Endothelial cell of umbilical vein (primary cell): ENCODE measurements at regions of chr2 and their contacts with region 1.

Region 1: GRCh38 chr2:198383392-198383791 is 579.0 kb downstream of the PLCL1 start:
- DNase-seq: no peak
- H3K4me3 ChIP-seq: no peak overlapping the region
- H3K27ac ChIP-seq: no peak overlapping the region
- H3K4me1 ChIP-seq: no peaks in the 10 kb centered on the region
- H3K27me3 ChIP-seq: no peaks in the 10 kb centered on the region
- CTCF ChIP-seq: no peak
- POLR2A ChIP-seq: no peak

Region 2: DNA sequence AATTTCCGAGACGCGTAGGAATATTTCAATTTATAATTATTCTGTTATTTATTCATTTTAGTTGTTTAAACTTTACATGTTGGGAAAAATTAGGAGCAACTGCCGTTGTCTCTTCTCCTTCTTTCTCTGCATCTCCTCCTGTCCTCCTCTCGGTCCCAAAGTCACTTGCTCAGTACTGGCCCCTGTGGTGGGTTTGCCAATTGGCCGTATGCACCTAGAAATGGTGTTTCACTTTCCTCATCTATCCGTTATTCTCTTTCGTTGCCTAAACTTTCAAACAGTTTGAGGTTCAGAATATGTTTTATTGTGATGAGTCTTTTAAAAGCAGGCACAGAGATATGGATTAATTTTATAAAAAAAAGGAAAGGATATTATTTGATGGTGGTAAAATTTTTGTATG is 61.1 kb before region 1 on chr2:
- CTCF ChIA-PET with region 1: no interaction called
- POLR2A ChIA-PET with region 1: no interaction called
- dilution Hi-C with region 1: no loop called
- intact Hi-C with region 1: no loop called
- DNase-seq: no peak
- H3K4me3 ChIP-seq: no peak overlapping the region
- H3K27ac ChIP-seq: no peak overlapping the region
- H3K4me1 ChIP-seq: no peaks in the 10 kb centered on the region
- H3K27me3 ChIP-seq: no peaks in the 10 kb centered on the region
- CTCF ChIP-seq: peak in 1 of 2 donors; percentile 24
- POLR2A ChIP-seq: no peak

Region 3: DNA sequence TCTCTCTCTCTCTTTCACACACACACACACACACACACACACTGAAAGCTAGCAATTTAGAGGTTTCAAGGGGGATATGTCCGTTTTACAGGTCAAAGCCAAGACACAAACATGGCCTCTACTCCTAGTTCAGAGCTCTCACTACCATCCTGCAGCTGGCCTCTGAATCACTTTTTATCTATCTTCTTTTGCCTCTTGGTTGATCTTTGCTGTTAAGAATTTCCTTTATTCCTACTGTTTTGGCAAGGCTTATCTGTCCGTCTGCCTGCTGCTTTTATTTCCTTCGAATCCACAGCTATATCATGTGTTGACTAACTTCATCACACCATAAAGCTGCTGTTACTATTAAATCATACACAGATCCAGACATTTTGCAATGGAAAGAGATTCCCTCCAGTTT is 36.0 kb before region 1 on chr2:
- CTCF ChIA-PET with region 1: no interaction called
- POLR2A ChIA-PET with region 1: no interaction called
- dilution Hi-C with region 1: no loop called
- intact Hi-C with region 1: no loop called
- DNase-seq: peak; percentile 40
- H3K4me3 ChIP-seq: no peak overlapping the region
- H3K27ac ChIP-seq: no peak overlapping the region
- H3K4me1 ChIP-seq: no peaks in the 10 kb centered on the region
- H3K27me3 ChIP-seq: no peaks in the 10 kb centered on the region
- CTCF ChIP-seq: no peak
- POLR2A ChIP-seq: no peak

Region 4: GRCh38 chr2:198417836-198418235 is 34.4 kb after region 1 on chr2:
- CTCF ChIA-PET with region 1: no interaction called
- POLR2A ChIA-PET with region 1: no interaction called
- dilution Hi-C with region 1: no loop called
- intact Hi-C with region 1: loop called (anchors 1 kb)
- DNase-seq: no peak
- H3K4me3 ChIP-seq: no peak overlapping the region
- H3K27ac ChIP-seq: no peak overlapping the region
- H3K4me1 ChIP-seq: no peaks in the 10 kb centered on the region
- H3K27me3 ChIP-seq: no peaks in the 10 kb centered on the region
- CTCF ChIP-seq: no peak
- POLR2A ChIP-seq: no peak